CD4-positive, alpha-beta memory T cell (primary cell): ENCODE measurements at regions of chr15 and their contacts with region 1.

Region 1: DNA sequence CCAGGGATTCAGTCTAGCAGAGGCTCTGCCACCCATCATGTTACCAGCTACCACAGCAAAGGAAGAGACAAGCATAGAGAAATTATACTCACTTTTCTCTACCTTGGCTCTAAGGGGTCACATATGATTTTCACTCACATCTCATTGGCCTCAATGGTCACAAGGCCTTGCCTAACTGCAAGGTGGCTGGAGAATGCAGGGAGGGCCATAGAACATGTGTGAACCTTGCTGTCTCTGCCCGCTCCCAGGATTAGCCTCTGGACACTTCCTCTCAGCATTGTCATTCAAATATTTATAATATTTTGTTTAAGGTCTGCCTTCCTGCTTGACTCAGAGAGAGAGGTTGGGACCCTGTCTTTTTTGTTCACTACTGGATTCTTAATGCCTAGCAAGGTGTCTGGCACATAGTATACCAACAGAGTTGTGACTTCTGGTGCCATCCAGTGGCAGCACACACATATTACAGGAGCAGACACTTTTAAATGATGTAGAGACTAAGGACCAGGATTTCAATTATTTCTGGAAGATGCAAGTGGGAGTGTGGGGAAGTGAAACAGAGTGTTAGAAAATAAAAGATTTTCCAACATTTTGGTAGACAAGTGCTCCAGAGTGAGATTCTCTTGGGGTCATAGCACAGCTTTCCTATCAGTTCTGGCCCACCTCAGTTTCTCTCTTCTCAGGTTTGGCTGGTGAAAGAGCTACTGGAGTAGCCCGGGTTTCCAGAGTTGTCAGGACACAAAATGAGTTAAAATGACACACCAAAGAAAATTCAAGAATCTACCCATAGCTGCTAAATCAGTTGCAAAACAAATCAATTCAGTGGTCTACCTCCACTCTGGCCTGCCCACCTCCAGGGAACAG is 119.0 kb upstream of the RASGRP1 start:
- DNase-seq: peak; percentile 68 to 76 (median 73)
- H3K4me3 ChIP-seq: no peak overlapping the region
- H3K4me3 Mint-ChIP-seq: peak overlapping the region in 7 of 8 donors; percentile 27 to 77 (median 55)
- H3K27ac ChIP-seq: peak overlapping the region; percentile 31
- H3K27ac Mint-ChIP-seq: peak overlapping the region; percentile 78 to 96 (median 94)
- H3K4me1 ChIP-seq: peaks cover 65% of the 10 kb centered on the region
- H3K4me1 Mint-ChIP-seq: peaks cover 61 to 73% (median 63%) of the 10 kb centered on the region in 4 donors
- H3K27me3 ChIP-seq: no peaks in the 10 kb centered on the region
- H3K27me3 Mint-ChIP-seq: no peaks in the 10 kb centered on the region

Region 2: DNA sequence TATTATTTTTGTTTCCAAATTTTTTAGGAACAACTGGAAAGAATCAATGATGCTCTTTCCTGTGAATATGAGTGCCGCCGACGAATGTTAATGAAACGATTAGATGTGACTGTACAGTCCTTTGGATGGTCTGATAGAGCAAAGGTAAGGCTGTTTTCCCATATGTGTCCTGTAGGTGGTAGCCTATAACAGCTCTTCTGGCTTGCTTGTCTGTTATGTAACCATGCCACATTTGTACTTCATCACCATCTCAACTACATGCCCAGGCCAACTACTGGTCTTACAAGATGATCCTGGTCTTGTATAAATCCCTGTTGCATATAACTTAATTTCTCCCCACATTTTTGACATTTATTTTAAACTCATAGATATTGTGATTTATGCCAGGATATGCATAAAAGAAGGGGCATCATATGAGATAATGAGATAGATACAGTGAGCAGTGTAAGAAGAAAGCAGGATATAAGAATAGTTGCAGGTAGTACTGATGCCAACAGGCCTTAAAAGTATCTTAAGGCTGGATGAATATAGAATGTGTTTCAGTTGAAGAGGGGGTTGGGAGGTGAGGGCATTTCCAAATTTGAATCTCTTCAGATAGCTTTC is 209.4 kb before region 1 on chr15:
- CTCF ChIA-PET with region 1: interaction called, 196 read pairs
- POLR2A ChIA-PET with region 1: interaction called, 15 read pairs
- intact Hi-C with region 1: no loop called
- DNase-seq: peak; percentile 57 to 73 (median 69)
- H3K4me3 ChIP-seq: no peak overlapping the region
- H3K4me3 Mint-ChIP-seq: peak overlapping the region in 1 of 8 donors; percentile 2
- H3K27ac ChIP-seq: peak overlapping the region; percentile 25
- H3K27ac Mint-ChIP-seq: peak overlapping the region; percentile 59 to 86 (median 81)
- H3K4me1 ChIP-seq: peaks cover 5% of the 10 kb centered on the region
- H3K4me1 Mint-ChIP-seq: peaks cover 8 to 9% (median 8%) of the 10 kb centered on the region in 4 donors
- H3K27me3 ChIP-seq: no peaks in the 10 kb centered on the region
- H3K27me3 Mint-ChIP-seq: no peaks in the 10 kb centered on the region

Region 3: GRCh38 chr15:38536201-38536676 is 147.4 kb before region 1 on chr15:
- CTCF ChIA-PET with region 1: interaction called, 59 read pairs
- POLR2A ChIA-PET with region 1: interaction called, 13 read pairs
- intact Hi-C with region 1: no loop called
- DNase-seq: no peak
- H3K4me3 ChIP-seq: no peak overlapping the region
- H3K4me3 Mint-ChIP-seq: peak overlapping the region in 4 of 8 donors; percentile 14 to 73 (median 34)
- H3K27ac ChIP-seq: no peak overlapping the region
- H3K27ac Mint-ChIP-seq: peak overlapping the region in 6 of 7 donors; percentile 36 to 84 (median 59)
- H3K4me1 ChIP-seq: peaks cover 97% of the 10 kb centered on the region
- H3K4me1 Mint-ChIP-seq: peaks cover 83 to 100% (median 92%) of the 10 kb centered on the region in 4 donors
- H3K27me3 ChIP-seq: no peaks in the 10 kb centered on the region
- H3K27me3 Mint-ChIP-seq: no peaks in the 10 kb centered on the region

Region 4: DNA sequence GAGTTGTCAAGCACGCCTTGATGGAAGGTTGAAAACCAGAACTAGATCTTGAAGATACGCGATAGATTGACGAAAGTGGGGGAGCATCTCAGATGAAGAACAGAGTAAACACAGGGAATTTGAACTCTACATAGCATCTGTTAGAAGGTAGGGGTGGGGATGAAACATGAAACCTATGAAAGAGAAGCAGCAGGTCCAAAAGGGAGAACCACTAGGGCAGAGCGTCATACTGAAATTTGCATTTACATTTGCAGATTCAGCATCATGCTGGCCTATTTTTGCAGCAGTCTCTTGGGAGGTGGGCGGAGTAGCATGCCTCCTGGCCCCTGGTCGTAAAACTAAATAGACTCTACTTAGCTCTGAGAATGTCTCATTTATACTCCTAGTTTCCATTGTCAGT is 72.9 kb before region 1 on chr15:
- CTCF ChIA-PET with region 1: interaction called, 12 read pairs
- POLR2A ChIA-PET with region 1: interaction called, 4 read pairs
- intact Hi-C with region 1: no loop called
- DNase-seq: peak; percentile 38 to 74 (median 49)
- H3K4me3 ChIP-seq: no peak overlapping the region
- H3K4me3 Mint-ChIP-seq: peak overlapping the region in 7 of 8 donors; percentile 2 to 82 (median 55)
- H3K27ac ChIP-seq: peak overlapping the region; percentile 33
- H3K27ac Mint-ChIP-seq: peak overlapping the region; percentile 66 to 95 (median 90)
- H3K4me1 ChIP-seq: peaks cover 48% of the 10 kb centered on the region
- H3K4me1 Mint-ChIP-seq: peaks cover 34 to 62% (median 52%) of the 10 kb centered on the region in 4 donors
- H3K27me3 ChIP-seq: no peaks in the 10 kb centered on the region
- H3K27me3 Mint-ChIP-seq: no peaks in the 10 kb centered on the region

Region 5: DNA sequence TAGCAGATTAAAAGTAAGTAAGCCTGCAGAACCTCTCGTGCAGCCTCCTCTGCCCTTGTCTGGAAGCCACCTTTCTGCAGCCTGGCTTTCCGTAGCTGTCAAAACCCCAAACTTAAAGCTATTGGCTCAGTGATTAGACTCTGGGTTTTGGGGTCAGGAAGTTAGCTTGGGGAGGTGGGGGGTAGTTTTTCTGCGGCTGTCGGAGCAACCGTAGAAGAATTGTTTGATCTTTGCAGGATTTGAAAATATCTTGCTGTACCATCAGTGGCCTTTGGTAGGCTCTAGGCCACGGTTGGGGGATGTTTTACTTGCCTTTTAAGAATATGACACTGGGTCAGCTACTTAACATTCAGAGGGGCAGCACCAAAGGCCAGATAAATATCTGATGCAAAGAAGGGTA is 30.6 kb before region 1 on chr15:
- CTCF ChIA-PET with region 1: interaction called, 451 read pairs
- POLR2A ChIA-PET with region 1: interaction called, 520 read pairs
- intact Hi-C with region 1: loop called (anchors 1 kb)
- DNase-seq: peak; percentile 91 to 94 (median 91)
- H3K4me3 ChIP-seq: peak overlapping the region; percentile 11 to 37
- H3K4me3 Mint-ChIP-seq: peak overlapping the region; percentile 82 to 91 (median 86)
- H3K27ac ChIP-seq: peak overlapping the region; percentile 59
- H3K27ac Mint-ChIP-seq: peak overlapping the region; percentile 93 to 98 (median 96)
- H3K4me1 ChIP-seq: peaks cover 87% of the 10 kb centered on the region
- H3K4me1 Mint-ChIP-seq: peaks cover 61 to 83% (median 70%) of the 10 kb centered on the region in 4 donors
- H3K27me3 ChIP-seq: no peaks in the 10 kb centered on the region
- H3K27me3 Mint-ChIP-seq: no peaks in the 10 kb centered on the region

Region 6: GRCh38 chr15:38954090-38954489 is 270.5 kb after region 1 on chr15:
- CTCF ChIA-PET with region 1: no interaction called
- POLR2A ChIA-PET with region 1: no interaction called
- intact Hi-C with region 1: no loop called
- DNase-seq: no peak
- H3K4me3 ChIP-seq: no peak overlapping the region
- H3K4me3 Mint-ChIP-seq: no peak overlapping the region
- H3K27ac ChIP-seq: no peak overlapping the region
- H3K27ac Mint-ChIP-seq: no peak overlapping the region
- H3K4me1 ChIP-seq: no peaks in the 10 kb centered on the region
- H3K4me1 Mint-ChIP-seq: no peaks in the 10 kb centered on the region
- H3K27me3 ChIP-seq: no peaks in the 10 kb centered on the region
- H3K27me3 Mint-ChIP-seq: peaks cover 2 to 3% of the 10 kb centered on the region in 2 donors